ENCODE measurements at regions of chr2 and their contacts with region 1.

Region 1: GRCh38 chr2:20350753-20351554 is at the start of gene PUM2:
- DNase-seq: peak; percentile 94 to 96 (median 95)
- H3K4me3 ChIP-seq: peak within 1 kb of the TSS; percentile 85 to 98 (median 88)
- H3K4me3 Mint-ChIP-seq: peak within 1 kb of the TSS; percentile 89 to 94
- H3K27ac ChIP-seq: peak within 1 kb of the TSS; percentile 90 to 92
- H3K27ac Mint-ChIP-seq: peak within 1 kb of the TSS in 6 of 7 donors; percentile 82 to 94 (median 90)
- H3K4me1 ChIP-seq: peaks cover 32 to 33% of the 10 kb centered on the region in 2 donors
- H3K4me1 Mint-ChIP-seq: peaks cover 29% of the 10 kb centered on the region
- H3K27me3 ChIP-seq: no peaks in the 10 kb centered on the region
- H3K27me3 Mint-ChIP-seq: peaks cover 0 to 3% (median 2%) of the 10 kb centered on the region in 3 donors
- CTCF ChIP-seq: no peak
- polyA plus RNA-seq, gene PUM2: 7.2 to 22.4 (median 8.3) TPM

Region 2: GRCh38 chr2:20424300-20425290 is 73.6 kb after region 1 on chr2:
- intact Hi-C with region 1: loop called in 1 of 2 experiments (anchors 10 kb)
- DNase-seq: peak; percentile 70 to 81 (median 79)
- H3K4me3 ChIP-seq: peak overlapping the region; percentile 1 to 67 (median 38)
- H3K4me3 Mint-ChIP-seq: peak overlapping the region; percentile 75 to 85
- H3K27ac ChIP-seq: peak overlapping the region; percentile 97 to 98
- H3K27ac Mint-ChIP-seq: peak overlapping the region; percentile 95 to 99 (median 98)
- H3K4me1 ChIP-seq: peaks cover 69 to 82% of the 10 kb centered on the region in 2 donors
- H3K4me1 Mint-ChIP-seq: peaks cover 77% of the 10 kb centered on the region
- H3K27me3 ChIP-seq: no peaks in the 10 kb centered on the region
- H3K27me3 Mint-ChIP-seq: peaks cover 0 to 2% (median 1%) of the 10 kb centered on the region in 3 donors
- CTCF ChIP-seq: no peak

Region 3: DNA sequence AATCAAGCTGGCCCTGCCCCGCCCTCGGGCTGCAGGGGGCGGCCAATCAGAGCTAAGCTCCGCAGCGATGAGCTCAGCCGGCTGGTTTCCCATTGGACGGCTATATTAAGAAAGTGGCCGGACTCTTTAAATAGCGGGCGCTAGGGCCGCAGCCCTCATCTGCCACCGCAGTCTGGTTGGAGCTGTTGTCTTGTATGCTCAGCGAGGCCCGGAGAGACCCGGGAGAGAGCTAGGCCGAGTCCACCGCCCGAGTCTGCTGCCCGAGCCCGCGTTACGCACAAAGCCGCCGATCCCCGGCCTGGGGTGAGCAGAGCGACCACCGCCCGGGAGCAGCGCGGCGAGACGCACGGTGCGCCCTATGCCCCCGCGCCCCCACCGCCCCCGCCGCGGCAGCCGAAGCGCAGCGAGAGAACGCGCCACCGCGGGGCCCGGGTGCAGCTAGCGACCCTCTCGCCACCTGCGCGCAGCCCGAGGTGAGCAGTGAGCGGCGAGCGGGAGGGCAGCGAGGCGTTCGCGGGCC is 96.0 kb after region 1 on chr2 and contains the start of gene RHOB:
- intact Hi-C with region 1: loop called in 1 of 2 experiments (anchors 10 kb)
- DNase-seq: peak; percentile 98 to 100 (median 98)
- H3K4me3 ChIP-seq: peak within 1 kb of the TSS; percentile 75 to 93 (median 91)
- H3K4me3 Mint-ChIP-seq: peak within 1 kb of the TSS; percentile 95 to 96
- H3K27ac ChIP-seq: peak within 1 kb of the TSS; percentile 63 to 81
- H3K27ac Mint-ChIP-seq: peak within 1 kb of the TSS; percentile 84 to 98 (median 95)
- H3K4me1 ChIP-seq: peaks cover 18 to 34% of the 10 kb centered on the region in 2 donors
- H3K4me1 Mint-ChIP-seq: peaks cover 33% of the 10 kb centered on the region
- H3K27me3 ChIP-seq: peaks cover 0 to 9% of the 10 kb centered on the region in 2 donors
- H3K27me3 Mint-ChIP-seq: peaks cover 15 to 36% (median 36%) of the 10 kb centered on the region in 3 donors
- CTCF ChIP-seq: no peak
- polyA plus RNA-seq, gene RHOB: 43.3 to 602 (median 66.3) TPM

Region 4: GRCh38 chr2:21422050-21422449 is 1071.1 kb after region 1 on chr2:
- intact Hi-C with region 1: no loop called
- DNase-seq: no peak
- H3K4me3 ChIP-seq: no peak overlapping the region
- H3K4me3 Mint-ChIP-seq: no peak overlapping the region
- H3K27ac ChIP-seq: no peak overlapping the region
- H3K27ac Mint-ChIP-seq: no peak overlapping the region
- H3K4me1 ChIP-seq: no peaks in the 10 kb centered on the region
- H3K4me1 Mint-ChIP-seq: no peaks in the 10 kb centered on the region
- H3K27me3 ChIP-seq: no peaks in the 10 kb centered on the region
- H3K27me3 Mint-ChIP-seq: peaks cover 0 to 4% (median 0%) of the 10 kb centered on the region in 3 donors
- CTCF ChIP-seq: peak; percentile 27